ENCODE measurements at regions of chr3 and their contacts with region 1.

Region 1: DNA sequence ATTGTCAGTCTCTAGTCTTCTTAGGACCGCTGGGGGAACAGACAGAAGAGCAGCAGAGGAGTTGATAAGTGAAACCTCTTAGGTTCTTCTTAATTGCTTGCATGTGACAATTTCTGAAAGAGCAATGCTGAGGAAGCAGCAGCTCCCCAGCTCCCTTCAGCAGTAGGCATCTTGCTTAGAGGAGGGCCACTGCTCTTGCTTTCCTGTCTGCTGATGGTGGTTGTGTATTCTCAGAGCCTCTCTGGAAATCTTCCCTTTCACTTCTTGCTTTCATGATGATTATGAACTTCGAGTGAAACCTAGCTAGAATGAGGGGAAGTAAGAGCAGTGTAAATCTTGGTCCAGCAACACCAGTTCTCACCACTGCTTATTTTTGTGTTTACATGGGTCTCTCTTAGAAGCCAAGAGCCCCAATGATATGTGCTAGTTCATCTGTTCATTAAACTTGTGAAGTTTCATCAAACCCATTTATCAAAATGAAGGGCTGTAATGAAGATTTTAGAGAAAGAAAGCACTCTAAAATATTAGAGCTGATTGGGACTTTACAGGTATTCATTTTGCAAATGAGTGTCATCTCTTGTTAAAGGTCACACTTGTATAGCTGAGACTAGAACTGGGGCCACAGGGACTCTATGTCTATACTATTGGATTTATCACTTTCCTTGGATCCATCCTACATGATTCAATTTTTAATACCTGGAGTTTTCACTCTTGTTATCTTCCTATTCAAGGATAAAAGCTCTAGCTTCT is 246.7 kb downstream of the LPP start:
- DNase-seq: peak; percentile 22
- H3K4me3 Mint-ChIP-seq: no peak overlapping the region
- H3K27ac Mint-ChIP-seq: peak overlapping the region; percentile 38
- H3K4me1 Mint-ChIP-seq: peaks cover 70% of the 10 kb centered on the region
- H3K27me3 Mint-ChIP-seq: no peaks in the 10 kb centered on the region

Region 2: DNA sequence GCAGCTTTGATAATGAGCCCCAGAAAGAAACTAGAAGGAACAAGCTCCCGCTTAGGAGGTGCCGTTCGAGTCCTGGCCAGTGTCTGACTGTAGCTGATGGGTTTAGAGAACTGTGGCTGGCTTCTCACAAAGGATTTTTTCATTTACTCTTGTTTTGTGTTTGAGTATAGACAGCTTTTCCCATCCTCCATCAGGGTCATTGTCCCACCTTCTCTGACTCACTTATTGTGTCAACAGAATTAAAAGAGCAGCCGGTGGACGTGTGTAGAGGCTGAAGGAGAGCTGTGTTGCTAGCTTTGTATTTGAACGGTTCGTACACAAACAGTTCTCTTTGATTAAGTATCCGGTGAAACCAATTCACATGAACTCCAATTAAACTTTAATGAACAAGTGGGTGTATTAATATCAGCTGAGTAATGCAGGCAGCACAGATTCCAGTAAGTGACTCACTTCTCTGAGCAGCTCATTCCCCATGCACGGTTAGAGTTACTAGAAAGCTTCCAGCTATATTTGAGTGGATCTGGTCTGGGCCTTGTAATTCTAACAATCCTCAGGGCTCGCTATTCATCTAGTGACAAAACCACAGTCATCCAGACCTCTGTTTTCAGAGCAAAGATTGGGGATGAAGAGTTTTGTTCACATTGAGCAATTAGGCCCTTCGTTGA is 105.7 kb before region 1 on chr3:
- intact Hi-C with region 1: loop called (anchors 5 kb)
- DNase-seq: no peak
- H3K4me3 Mint-ChIP-seq: no peak overlapping the region
- H3K27ac Mint-ChIP-seq: no peak overlapping the region
- H3K4me1 Mint-ChIP-seq: peaks cover 66% of the 10 kb centered on the region
- H3K27me3 Mint-ChIP-seq: no peaks in the 10 kb centered on the region

Region 3: GRCh38 chr3:188320757-188321156 is 79.9 kb before region 1 on chr3:
- intact Hi-C with region 1: loop called (anchors 5 kb)
- DNase-seq: no peak
- H3K4me3 Mint-ChIP-seq: no peak overlapping the region
- H3K27ac Mint-ChIP-seq: no peak overlapping the region
- H3K4me1 Mint-ChIP-seq: peaks cover 50% of the 10 kb centered on the region
- H3K27me3 Mint-ChIP-seq: peaks cover 7% of the 10 kb centered on the region

Region 4: DNA sequence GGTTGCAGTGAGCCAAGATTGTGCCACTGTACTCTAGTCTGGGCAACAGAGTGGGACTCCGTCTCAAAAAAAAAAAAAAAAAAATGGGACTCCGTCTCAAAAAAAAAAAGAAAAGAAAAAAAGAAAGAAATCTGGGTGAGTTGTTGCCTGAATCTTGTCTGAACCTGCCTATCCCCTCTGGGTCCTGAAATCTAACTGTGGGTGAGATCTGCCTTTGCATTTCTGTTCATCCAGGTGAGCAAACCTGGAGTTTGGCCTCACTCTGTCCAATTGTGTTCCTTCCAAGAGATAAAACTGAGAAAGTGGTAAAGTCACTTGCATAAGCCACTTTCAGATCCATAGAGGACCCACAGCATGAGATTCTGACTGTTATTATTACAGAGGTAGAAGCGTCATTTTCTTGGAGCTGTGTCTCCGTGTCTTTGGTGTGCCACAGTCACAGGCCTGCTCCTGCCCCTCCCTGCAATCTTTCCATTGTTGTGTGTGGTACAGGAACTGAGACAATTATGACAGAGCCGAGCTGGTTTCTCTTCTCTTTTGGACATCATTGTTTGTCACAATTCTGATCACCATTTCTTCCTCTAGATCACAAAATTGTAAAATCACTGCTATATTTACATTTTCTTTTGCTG is 10.8 kb before region 1 on chr3:
- intact Hi-C with region 1: loop called (anchors 1 kb)
- DNase-seq: peak; percentile 30
- H3K4me3 Mint-ChIP-seq: no peak overlapping the region
- H3K27ac Mint-ChIP-seq: peak overlapping the region; percentile 75
- H3K4me1 Mint-ChIP-seq: peaks cover 33% of the 10 kb centered on the region
- H3K27me3 Mint-ChIP-seq: no peaks in the 10 kb centered on the region

Region 5: GRCh38 chr3:188439080-188439479 is 38.4 kb after region 1 on chr3:
- intact Hi-C with region 1: loop called (anchors 5 kb)
- DNase-seq: peak; percentile 15
- H3K4me3 Mint-ChIP-seq: peak overlapping the region; percentile 45
- H3K27ac Mint-ChIP-seq: peak overlapping the region; percentile 79
- H3K4me1 Mint-ChIP-seq: peaks cover 47% of the 10 kb centered on the region
- H3K27me3 Mint-ChIP-seq: no peaks in the 10 kb centered on the region

Region 6: DNA sequence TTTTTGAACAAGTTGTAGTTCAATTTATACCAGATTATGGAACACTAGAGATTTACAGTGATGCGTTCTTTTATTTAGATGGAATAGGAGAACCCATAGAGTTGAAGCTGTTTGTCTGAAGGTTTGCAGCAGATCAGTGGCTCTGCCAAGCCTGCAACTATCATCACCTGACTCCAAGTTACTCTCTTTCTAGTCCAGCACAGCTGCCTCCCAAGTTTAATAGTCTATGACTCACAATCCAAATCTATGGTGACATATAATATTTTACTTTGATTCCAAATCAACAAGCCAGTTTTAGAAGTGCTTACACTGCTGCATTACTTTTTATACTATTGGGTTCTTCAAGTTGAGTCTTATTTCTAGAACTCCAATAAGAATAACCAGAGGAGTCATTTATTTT is 153.7 kb after region 1 on chr3:
- intact Hi-C with region 1: loop called (anchors 5 kb)
- DNase-seq: no peak
- H3K4me3 Mint-ChIP-seq: no peak overlapping the region
- H3K27ac Mint-ChIP-seq: no peak overlapping the region
- H3K4me1 Mint-ChIP-seq: peaks cover 35% of the 10 kb centered on the region
- H3K27me3 Mint-ChIP-seq: no peaks in the 10 kb centered on the region